Ascending aorta (tissue), 2 donors: ENCODE measurements at regions of chr2 and their contacts with region 1.

Region 1: DNA sequence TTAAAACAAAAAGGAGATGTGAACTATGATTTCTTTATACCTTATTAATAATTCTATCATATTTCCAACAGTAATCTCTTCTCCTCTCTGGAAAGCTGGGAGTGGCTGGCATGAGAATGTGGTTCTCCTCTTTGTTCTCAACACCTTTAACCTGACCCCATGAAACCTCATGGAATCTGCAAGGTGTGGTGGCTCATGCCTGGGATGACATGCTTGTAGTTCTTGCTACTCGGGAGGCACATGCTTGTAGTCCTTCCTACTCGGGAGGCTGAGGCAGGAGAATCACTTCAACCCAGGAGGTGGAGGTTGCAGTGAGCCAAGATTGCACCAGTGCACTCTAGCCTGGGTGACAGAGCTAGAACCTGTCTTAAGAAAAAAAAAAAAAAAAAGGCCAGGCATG is 10.8 kb upstream of the CDCA7 start:
- DNase-seq: no peak
- H3K4me3 ChIP-seq: no peak overlapping the region
- H3K27ac ChIP-seq: no peak overlapping the region
- H3K4me1 ChIP-seq: no peaks in the 10 kb centered on the region
- H3K27me3 ChIP-seq: no peaks in the 10 kb centered on the region
- CTCF ChIP-seq: no peak

Region 2: DNA sequence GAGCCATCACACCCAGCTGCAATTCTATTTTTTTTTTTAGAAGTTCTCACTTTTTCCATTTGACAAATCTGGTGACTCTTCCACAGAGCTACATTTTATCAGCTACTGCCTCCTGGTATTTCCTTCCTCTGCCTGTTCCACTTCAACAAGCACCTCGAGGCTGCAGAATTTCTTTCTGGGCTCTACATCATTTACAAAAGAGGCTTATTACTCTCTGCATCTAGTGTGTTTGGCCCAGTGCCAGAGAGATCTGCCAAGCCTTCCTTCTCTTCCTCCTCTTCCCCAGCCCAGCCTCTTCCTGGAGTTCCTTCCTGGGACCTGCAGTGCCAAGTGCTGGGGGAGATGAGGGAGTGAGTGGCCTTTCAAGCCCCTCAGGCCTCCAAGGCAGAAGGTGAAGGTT is 1036.1 kb before region 1 on chr2:
- intact Hi-C with region 1: loop called (anchors 5 kb)
- DNase-seq: no peak
- H3K4me3 ChIP-seq: no peak overlapping the region
- H3K27ac ChIP-seq: no peak overlapping the region
- H3K4me1 ChIP-seq: no peaks in the 10 kb centered on the region
- H3K27me3 ChIP-seq: no peaks in the 10 kb centered on the region
- CTCF ChIP-seq: no peak

Region 3: DNA sequence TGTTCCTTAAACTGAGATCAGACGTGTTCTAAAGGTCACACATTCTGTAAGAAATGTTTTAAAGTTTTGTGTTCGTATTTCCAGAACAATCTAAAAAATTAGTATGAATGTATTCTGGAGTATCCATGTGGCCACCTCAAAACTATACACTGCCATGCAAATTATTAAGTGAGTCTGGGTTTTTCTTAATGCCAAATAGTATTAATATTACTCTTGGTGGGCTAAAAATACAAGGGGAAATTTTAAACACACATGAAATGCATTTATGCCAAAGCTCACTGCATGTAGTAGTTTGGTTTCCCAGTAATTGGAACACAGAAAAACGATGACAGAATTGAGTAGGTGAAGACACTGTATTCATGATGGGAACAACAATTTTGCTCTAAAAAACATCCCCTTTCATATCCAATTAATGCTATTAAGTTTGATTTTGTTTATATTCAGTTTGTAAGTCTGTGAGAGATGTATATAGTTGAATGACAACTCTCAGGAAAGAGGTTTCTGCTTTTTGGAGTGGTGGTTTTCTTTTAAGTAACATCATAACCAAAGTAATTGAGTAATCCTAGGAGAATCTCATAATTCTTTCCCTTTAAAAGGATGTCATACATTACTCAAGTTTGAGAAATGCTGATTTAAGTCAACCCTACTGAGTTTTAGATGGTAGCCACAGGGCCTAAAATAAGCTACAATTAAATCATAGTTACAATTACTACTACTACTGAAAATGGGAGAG is 64.9 kb before region 1 on chr2:
- intact Hi-C with region 1: no loop called
- DNase-seq: no peak
- H3K4me3 ChIP-seq: no peak overlapping the region
- H3K27ac ChIP-seq: no peak overlapping the region
- H3K4me1 ChIP-seq: no peaks in the 10 kb centered on the region
- H3K27me3 ChIP-seq: no peaks in the 10 kb centered on the region
- CTCF ChIP-seq: no peak